ENCODE measurements at regions of chr2 and their contacts with region 1.

Region 1: GRCh38 chr2:177296040-177296439 is 31.5 kb upstream of the NFE2L2 start:
- DNase-seq: no peak
- H3K4me3 Mint-ChIP-seq: no peak overlapping the region
- H3K27ac Mint-ChIP-seq: no peak overlapping the region
- H3K4me1 Mint-ChIP-seq: peaks cover 8% of the 10 kb centered on the region
- H3K27me3 Mint-ChIP-seq: no peaks in the 10 kb centered on the region
- CTCF ChIP-seq: peak; percentile 53

Region 2: DNA sequence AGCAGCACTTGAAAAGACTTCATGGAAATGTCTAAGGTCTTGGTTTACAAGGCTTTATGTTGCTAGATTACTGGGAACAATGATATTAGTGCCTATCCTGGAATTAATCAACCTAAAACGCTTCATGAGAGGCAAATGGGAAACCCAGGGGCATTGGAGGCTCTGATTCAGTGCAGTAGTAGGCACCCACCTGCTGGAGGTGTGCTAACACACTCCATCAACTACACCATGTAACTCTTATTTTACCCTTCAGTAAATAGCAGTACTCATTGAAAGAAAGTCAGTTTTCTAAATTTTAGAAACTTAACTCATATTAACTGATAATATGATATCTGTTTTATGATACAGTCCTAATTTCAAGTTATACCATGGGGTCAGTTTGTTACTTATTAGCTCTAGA is 100.8 kb before region 1 on chr2:
- CTCF ChIA-PET with region 1: no interaction called
- intact Hi-C with region 1: no loop called
- DNase-seq: no peak
- H3K4me3 Mint-ChIP-seq: no peak overlapping the region
- H3K27ac Mint-ChIP-seq: no peak overlapping the region
- H3K4me1 Mint-ChIP-seq: no peaks in the 10 kb centered on the region
- H3K27me3 Mint-ChIP-seq: no peaks in the 10 kb centered on the region
- CTCF ChIP-seq: no peak

Region 3: DNA sequence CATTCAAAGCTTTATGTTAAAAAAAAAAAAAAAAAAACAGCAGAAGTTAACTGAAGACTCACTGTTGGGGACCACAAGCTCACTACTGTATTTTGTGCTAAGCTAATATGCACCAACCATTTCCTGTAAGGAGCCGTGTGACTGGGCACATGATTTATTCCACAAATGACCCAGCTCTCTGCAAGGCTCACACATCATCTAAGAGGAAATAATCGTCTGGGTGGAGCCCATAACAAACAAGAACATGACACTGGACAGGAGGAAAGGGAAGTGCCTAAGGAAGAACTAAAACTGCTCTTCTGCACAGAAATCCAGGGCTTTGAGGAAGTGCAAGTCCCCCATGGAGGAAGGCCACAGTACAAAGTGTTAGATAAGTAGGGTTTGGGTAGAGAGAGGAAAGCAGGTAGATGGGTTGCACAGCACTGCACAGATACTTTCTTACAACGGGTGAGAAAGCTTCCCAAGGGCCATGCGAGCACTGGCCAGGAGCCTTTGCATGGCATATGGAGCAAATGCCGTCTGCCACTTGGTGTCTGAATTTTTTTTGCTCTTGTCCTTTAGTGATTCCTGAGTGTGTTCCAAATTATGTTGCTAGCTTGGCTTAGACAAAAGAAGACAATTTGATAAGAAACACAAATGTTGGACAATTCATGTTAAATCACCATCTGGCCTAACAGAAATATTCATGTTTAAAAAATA is 56.0 kb before region 1 on chr2:
- CTCF ChIA-PET with region 1: no interaction called
- intact Hi-C with region 1: loop called (anchors 5 kb)
- DNase-seq: peak; percentile 53
- H3K4me3 Mint-ChIP-seq: peak overlapping the region; percentile 70
- H3K27ac Mint-ChIP-seq: peak overlapping the region; percentile 99
- H3K4me1 Mint-ChIP-seq: peaks cover 63% of the 10 kb centered on the region
- H3K27me3 Mint-ChIP-seq: no peaks in the 10 kb centered on the region
- CTCF ChIP-seq: no peak